Breast epithelium (tissue), 4 donors: ENCODE measurements at regions of chr12 and their contacts with region 1.

Region 1: DNA sequence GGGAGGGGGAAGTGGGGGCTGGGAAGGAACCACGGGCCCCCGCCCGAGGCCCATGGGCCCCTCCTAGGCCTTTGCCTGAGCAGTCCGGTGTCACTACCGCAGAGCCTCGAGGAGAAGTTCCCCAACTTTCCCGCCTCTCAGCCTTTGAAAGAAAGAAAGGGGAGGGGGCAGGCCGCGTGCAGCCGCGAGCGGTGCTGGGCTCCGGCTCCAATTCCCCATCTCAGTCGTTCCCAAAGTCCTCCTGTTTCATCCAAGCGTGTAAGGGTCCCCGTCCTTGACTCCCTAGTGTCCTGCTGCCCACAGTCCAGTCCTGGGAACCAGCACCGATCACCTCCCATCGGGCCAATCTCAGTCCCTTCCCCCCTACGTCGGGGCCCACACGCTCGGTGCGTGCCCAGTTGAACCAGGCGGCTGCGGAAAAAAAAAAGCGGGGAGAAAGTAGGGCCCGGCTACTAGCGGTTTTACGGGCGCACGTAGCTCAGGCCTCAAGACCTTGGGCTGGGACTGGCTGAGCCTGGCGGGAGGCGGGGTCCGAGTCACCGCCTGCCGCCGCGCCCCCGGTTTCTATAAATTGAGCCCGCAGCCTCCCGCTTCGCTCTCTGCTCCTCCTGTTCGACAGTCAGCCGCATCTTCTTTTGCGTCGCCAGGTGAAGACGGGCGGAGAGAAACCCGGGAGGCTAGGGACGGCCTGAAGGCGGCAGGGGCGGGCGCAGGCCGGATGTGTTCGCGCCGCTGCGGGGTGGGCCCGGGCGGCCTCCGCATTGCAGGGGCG is at the start of gene GAPDH:
- DNase-seq: peak; percentile 85 to 91
- H3K4me3 ChIP-seq: peak within 1 kb of the TSS; percentile 82 to 97 (median 88)
- H3K27ac ChIP-seq: peak within 1 kb of the TSS; percentile 94 to 98
- H3K4me1 ChIP-seq: peaks cover 6 to 22% of the 10 kb centered on the region in 2 donors
- H3K27me3 ChIP-seq: no peaks in the 10 kb centered on the region
- CTCF ChIP-seq: no peak
- POLR2A ChIP-seq: peak; percentile 81
- total RNA-seq, gene GAPDH: 1,134 to 1,818 (median 1,628) TPM

Region 2: DNA sequence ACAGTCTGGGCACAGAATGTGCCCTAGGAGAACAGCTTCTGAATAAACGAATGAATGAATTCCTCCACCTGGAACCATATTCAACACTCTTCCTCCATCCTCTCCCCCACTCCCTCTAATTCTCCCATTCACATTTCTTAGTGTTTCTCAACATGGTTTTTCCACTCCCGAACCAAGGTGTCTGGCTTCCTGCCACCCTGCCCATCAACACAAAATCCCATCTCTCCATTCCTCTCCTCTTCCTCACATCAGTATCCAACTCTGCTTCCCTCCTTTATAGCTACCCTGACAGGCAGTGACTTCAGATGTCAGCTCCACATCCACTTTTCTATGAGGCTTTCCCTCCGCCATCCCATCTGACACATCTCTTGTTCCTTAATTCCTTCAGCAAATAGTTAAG is 195.2 kb before region 1 on chr12:
- intact Hi-C with region 1: loop called (anchors 1 kb)
- DNase-seq: no peak
- H3K4me3 ChIP-seq: peak overlapping the region; percentile 88 to 91 (median 89)
- H3K27ac ChIP-seq: peak overlapping the region; percentile 98 to 99
- H3K4me1 ChIP-seq: peaks cover 18 to 56% of the 10 kb centered on the region in 2 donors
- H3K27me3 ChIP-seq: no peaks in the 10 kb centered on the region
- CTCF ChIP-seq: no peak
- POLR2A ChIP-seq: no peak

Region 3: DNA sequence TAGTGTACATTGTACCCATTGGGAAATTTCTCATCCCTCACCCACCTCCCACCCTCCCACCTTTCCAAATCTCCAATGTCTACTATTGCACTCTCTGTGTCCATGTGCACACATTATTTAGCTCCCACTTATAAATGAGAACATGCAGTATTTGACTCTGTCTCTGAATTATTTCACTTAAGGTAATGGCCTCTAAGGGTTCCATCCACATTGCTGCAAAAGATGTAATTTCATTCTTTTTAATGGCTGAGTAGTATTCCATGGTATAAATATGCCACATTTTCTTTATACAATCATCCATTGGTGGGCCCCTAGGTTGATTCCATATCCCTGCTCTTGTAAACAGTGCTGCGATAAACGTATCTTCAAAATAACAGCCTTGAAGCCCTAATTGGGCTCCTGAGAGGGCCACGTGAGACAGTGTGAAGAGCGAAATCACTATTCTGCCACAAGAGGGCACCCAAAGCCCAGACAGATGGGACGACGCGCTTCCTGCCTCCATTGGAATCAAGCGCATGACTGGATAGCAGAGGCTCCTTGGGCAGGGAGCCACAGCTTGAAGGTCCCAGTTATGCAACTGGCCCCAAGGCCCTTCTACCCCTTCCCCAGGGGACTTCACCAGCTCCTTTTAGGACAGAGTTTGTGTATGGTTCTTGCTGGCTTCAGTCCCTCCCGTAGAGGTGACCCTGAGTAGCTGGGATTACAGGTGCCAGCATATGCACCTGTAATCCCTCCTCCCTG is 110.7 kb before region 1 on chr12:
- intact Hi-C with region 1: loop called (anchors 10 kb)
- DNase-seq: peak; percentile 73 to 76
- H3K4me3 ChIP-seq: no peak overlapping the region
- H3K27ac ChIP-seq: no peak overlapping the region
- H3K4me1 ChIP-seq: peaks cover 0 to 4% of the 10 kb centered on the region in 2 donors
- H3K27me3 ChIP-seq: no peaks in the 10 kb centered on the region
- CTCF ChIP-seq: peak; percentile 74 to 91 (median 91)
- POLR2A ChIP-seq: no peak

Region 4: DNA sequence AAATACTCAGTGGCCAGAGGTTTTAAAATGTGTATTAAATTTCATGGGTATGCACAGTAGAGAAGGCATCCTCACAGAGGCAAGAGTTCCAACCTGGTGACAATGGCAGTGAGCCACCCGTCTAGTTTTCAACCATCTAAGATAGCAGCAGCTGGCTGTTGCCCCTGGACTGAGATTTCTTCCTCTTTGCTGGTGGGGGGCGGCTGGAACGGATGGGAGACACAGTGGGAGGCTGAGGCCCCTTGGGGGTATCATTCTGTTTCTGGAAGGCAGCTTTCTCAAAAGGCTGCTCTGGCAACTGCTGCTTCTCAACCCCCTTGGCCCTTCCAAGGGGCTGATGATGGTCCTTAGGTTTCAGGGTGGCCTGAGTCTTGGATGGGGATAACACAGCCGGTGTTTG is 22.7 kb after region 1 on chr12:
- intact Hi-C with region 1: loop called (anchors 2 kb)
- DNase-seq: no peak
- H3K4me3 ChIP-seq: no peak overlapping the region
- H3K27ac ChIP-seq: no peak overlapping the region
- H3K4me1 ChIP-seq: peaks cover 14 to 30% of the 10 kb centered on the region in 2 donors
- H3K27me3 ChIP-seq: no peaks in the 10 kb centered on the region
- CTCF ChIP-seq: no peak
- POLR2A ChIP-seq: no peak